Activated naive CD8-positive, alpha-beta T cell treated with anti-CD3 and anti-CD28 coated beads, Interleukin-2, amount 10 ng/mL, durations not matched to agents 7 days and 5 days (primary cell): ENCODE measurements at regions of chr10 and their contacts with region 1.

Region 1: DNA sequence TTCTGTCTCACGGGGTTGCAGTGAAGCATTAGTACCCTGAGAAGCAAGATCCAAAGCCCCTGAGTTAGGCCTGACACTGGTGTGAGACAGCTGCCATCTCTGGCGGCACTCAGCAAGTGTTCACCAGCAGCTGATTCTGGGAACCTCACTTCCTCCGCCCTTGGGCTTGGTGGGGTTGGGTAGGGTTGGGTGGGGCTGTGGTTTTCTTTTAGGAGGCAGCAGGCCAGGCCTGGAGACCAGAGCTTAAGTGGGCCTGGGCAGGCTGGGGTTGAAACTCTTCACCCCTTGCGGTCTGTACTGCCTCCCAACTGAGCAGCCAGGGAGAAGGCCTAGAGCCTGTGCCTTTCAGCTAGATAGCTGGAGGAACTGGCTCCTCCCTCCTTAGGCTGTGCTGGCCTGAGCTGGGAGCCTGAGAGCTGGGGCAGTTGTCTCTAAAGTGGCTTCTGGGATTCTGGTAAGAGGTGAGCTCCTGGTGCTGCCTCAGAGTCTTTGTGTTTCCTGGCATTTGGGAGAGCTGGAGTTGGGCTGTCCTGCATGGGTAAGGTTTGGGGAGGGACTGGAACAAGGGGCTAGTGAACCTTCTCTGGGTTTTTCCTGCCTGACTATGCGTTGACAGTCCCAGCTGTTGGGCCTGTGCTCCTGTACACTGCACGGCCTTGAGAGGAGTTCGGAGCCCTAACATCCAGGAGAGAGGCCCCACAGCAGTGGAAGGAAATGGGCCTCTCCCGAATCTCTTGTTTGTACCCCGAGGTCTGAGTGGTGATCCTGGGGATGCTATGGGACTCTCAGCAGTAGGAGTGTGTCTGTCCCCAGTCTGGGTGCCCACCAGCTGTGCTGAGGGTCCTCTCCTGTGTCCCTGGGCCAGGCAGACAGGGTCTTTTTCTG is 5.2 kb downstream of the TSPAN14 start:
- DNase-seq: peak; percentile 70
- ATAC-seq: peak; percentile 57
- H3K4me3 Mint-ChIP-seq: peak overlapping the region; percentile 99
- H3K27ac Mint-ChIP-seq: peak overlapping the region; percentile 93
- H3K4me1 Mint-ChIP-seq: peaks cover 74% of the 10 kb centered on the region
- H3K27me3 Mint-ChIP-seq: no peaks in the 10 kb centered on the region

Region 2: GRCh38 chr10:80421707-80422536 is 37.4 kb before region 1 on chr10:
- POLR2A ChIA-PET with region 1: no interaction called
- DNase-seq: no peak
- ATAC-seq: no peak
- H3K4me3 Mint-ChIP-seq: no peak overlapping the region
- H3K27ac Mint-ChIP-seq: no peak overlapping the region
- H3K4me1 Mint-ChIP-seq: peaks cover 1% of the 10 kb centered on the region
- H3K27me3 Mint-ChIP-seq: no peaks in the 10 kb centered on the region

Region 3: GRCh38 chr10:80472234-80473095 is 13.2 kb after region 1 on chr10:
- POLR2A ChIA-PET with region 1: interaction called, 74 read pairs
- DNase-seq: no peak
- ATAC-seq: peak; percentile 59
- H3K4me3 Mint-ChIP-seq: peak overlapping the region; percentile 74
- H3K27ac Mint-ChIP-seq: peak overlapping the region; percentile 90
- H3K4me1 Mint-ChIP-seq: peaks cover 75% of the 10 kb centered on the region
- H3K27me3 Mint-ChIP-seq: no peaks in the 10 kb centered on the region

Region 4: GRCh38 chr10:80487791-80488538 is 28.7 kb after region 1 on chr10:
- POLR2A ChIA-PET with region 1: interaction called, 150 read pairs
- DNase-seq: peak; percentile 81
- ATAC-seq: peak; percentile 80
- H3K4me3 Mint-ChIP-seq: peak overlapping the region; percentile 80
- H3K27ac Mint-ChIP-seq: peak overlapping the region; percentile 89
- H3K4me1 Mint-ChIP-seq: peaks cover 93% of the 10 kb centered on the region
- H3K27me3 Mint-ChIP-seq: no peaks in the 10 kb centered on the region

Region 5: GRCh38 chr10:80504158-80504811 is 45.0 kb after region 1 on chr10:
- POLR2A ChIA-PET with region 1: interaction called, 34 read pairs
- DNase-seq: no peak
- ATAC-seq: no peak
- H3K4me3 Mint-ChIP-seq: no peak overlapping the region
- H3K27ac Mint-ChIP-seq: peak overlapping the region; percentile 81
- H3K4me1 Mint-ChIP-seq: peaks cover 62% of the 10 kb centered on the region
- H3K27me3 Mint-ChIP-seq: no peaks in the 10 kb centered on the region

Region 6: DNA sequence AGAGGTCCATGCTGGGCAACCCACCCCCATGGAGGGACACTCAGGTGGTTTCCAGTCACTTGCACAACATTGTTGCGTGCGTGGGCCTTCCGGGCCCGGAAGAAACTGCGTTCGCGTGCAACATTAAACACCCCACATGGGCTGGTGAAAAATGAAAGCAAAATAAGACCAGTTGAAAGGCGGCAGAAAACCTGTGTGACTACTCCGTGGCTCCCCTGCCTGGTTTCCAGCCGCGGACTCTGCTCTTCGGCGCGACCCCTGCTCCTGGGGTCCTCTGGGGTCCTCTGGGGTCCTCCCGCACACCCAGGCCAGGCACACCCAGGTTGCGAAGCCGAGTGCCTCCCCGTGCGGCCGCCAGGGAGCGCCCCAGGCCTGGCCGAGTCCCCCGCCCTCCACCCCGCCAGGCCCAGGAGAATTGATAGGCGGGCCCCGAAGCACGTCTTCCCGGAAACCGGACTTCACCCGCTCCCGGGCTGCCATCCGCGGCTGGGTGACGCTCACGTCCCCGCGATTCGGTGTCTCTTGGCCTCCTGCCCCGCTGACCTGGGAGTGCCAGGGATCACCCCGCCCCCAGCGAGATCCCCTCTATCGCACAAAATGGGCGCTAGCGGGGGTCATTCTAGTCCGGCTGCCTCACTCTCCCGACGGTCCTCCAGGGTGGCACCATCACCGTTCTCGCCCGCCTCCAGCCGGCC is 76.5 kb after region 1 on chr10:
- POLR2A ChIA-PET with region 1: no interaction called
- DNase-seq: peak; percentile 81
- ATAC-seq: peak; percentile 88
- H3K4me3 Mint-ChIP-seq: peak overlapping the region; percentile 93
- H3K27ac Mint-ChIP-seq: peak overlapping the region; percentile 98
- H3K4me1 Mint-ChIP-seq: peaks cover 33% of the 10 kb centered on the region
- H3K27me3 Mint-ChIP-seq: no peaks in the 10 kb centered on the region